Activated CD4-positive, alpha-beta memory T cell treated with anti-CD3 and anti-CD28 coated beads for 36 hours (primary cell): ENCODE measurements at regions of chr19 and their contacts with region 1.

Region 1: GRCh38 chr19:57819475-57820148 is 4.9 kb upstream of the ZNF552 start:
- DNase-seq: peak; percentile 89
- H3K4me3 Mint-ChIP-seq: peak overlapping the region; percentile 98
- H3K27ac Mint-ChIP-seq: peak overlapping the region; percentile 95
- H3K4me1 Mint-ChIP-seq: peaks cover 48% of the 10 kb centered on the region
- H3K27me3 Mint-ChIP-seq: no peaks in the 10 kb centered on the region

Region 2: DNA sequence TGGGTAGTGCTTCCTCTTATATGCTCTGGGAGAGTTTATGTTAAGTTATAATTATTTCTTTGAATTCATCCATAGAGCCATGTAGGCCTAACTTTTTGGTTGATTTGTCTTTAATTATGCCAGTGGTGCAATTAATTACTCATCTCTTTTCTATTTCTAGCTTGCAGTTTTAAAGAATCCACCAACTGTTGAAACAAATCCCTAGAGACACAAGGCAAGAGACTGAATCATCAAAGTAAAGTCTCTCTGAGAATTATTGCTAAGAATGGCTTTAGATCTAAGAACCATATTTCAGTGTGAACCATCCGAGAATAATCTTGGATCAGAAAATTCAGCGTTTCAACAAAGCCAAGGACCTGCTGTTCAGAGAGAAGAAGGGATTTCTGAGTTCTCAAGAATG is 143.7 kb before region 1 on chr19:
- CTCF ChIA-PET with region 1: no interaction called
- POLR2A ChIA-PET with region 1: no interaction called
- intact Hi-C with region 1: no loop called
- DNase-seq: no peak
- H3K4me3 Mint-ChIP-seq: no peak overlapping the region
- H3K27ac Mint-ChIP-seq: no peak overlapping the region
- H3K4me1 Mint-ChIP-seq: no peaks in the 10 kb centered on the region
- H3K27me3 Mint-ChIP-seq: peaks cover 10% of the 10 kb centered on the region

Region 3: DNA sequence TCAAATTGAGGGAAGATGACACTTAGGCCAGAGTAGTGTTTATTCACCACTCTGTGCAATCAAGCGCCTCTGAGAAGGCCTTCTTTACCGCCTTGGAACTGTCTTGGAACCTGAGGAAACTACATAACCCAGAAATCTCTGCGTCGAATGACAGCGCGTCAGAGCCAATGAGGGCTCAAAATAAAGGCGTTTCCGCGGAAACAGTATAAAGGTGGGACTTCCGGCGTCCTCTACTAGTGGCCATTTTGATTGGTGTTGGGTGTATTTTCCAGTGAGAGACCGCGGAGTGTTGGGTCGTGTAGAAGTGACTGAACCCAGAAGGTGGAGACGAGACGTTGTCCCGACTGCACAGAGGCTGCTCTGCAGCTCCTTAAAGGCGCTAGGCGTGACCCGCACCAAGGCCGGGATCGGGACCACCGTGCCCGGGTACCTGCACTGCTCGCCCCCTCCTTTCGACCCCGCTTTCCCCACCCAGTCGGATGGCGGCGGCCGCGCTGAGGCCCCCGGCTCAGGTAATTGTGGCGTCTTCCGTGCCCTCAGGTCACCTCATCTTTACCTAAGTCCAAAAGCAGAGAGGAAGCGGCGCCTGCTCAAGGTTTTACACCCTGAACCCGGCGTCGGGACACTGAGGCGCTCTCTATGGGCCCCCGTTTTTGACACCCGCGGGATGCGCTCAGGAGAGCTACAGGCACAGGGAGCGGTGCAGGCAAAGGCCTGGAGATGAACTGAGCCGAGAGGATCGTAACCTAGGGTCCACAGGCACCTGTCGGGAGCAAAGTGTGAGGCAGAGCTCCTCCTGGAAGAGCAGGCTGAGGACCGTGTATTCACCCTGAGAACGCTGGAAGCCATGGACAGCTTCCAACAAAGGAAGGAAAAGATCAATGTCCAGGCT is 72.8 kb before region 1 on chr19 and contains the start of gene ZNF776:
- CTCF ChIA-PET with region 1: no interaction called
- POLR2A ChIA-PET with region 1: no interaction called
- intact Hi-C with region 1: loop called (anchors 2 kb)
- DNase-seq: peak; percentile 89
- H3K4me3 Mint-ChIP-seq: peak within 1 kb of the TSS; percentile 94
- H3K27ac Mint-ChIP-seq: peak within 1 kb of the TSS; percentile 86
- H3K4me1 Mint-ChIP-seq: peaks cover 13% of the 10 kb centered on the region
- H3K27me3 Mint-ChIP-seq: no peaks in the 10 kb centered on the region
- total RNA-seq, gene ZNF776: 7.8 to 8.3 TPM

Region 4: DNA sequence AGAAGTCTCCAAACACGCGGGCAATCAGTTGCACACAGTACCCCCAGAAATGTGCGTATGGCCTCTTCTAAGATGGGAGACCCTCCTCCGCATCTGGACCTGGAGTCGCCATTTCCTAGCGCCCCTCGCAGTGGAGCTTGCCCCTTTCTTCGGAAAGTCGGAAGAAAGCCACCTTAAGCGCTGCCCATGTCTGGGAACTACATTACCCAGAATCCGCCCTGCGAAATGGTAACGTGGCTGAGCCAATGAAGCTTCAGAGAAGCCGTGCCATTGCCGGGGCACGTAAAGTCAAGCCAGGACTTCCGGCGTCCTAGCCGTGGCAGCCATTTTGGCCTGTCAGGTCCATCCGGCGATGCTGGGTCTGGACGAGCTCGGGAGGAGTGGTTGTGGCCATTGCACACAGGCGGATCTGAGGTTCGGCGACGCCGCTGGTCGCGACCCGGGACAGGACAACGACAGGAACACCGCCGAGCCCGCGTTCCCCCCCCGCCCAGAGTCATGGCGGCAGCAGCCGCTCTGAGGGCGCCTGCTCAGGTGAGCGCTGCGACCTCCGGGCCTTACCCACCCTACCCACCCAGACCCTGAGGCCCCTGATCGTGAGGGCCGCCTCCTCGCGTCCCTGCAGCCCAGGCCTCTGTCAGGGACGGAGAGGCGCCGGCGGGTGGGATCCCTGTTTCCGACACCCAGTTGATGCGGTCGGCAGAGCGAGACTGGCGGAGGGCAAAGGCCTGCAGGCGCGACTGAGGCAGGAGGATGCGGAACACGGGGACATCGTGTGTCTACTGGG is 50.1 kb before region 1 on chr19 and contains the start of gene ZNF586:
- CTCF ChIA-PET with region 1: no interaction called
- POLR2A ChIA-PET with region 1: interaction called, 7 read pairs
- intact Hi-C with region 1: loop called (anchors 1 kb)
- DNase-seq: peak; percentile 92
- H3K4me3 Mint-ChIP-seq: peak within 1 kb of the TSS; percentile 93
- H3K27ac Mint-ChIP-seq: peak within 1 kb of the TSS; percentile 87
- H3K4me1 Mint-ChIP-seq: peaks cover 26% of the 10 kb centered on the region
- H3K27me3 Mint-ChIP-seq: no peaks in the 10 kb centered on the region
- total RNA-seq, gene ZNF586: 11.5 to 11.7 TPM

Region 5: GRCh38 chr19:57850553-57851017 is 31.0 kb after region 1 on chr19:
- CTCF ChIA-PET with region 1: interaction called, 6 read pairs
- POLR2A ChIA-PET with region 1: interaction called, 5 read pairs
- intact Hi-C with region 1: loop called (anchors 5 kb)
- DNase-seq: peak; percentile 51
- H3K4me3 Mint-ChIP-seq: peak overlapping the region; percentile 89
- H3K27ac Mint-ChIP-seq: peak overlapping the region; percentile 90
- H3K4me1 Mint-ChIP-seq: peaks cover 19% of the 10 kb centered on the region
- H3K27me3 Mint-ChIP-seq: no peaks in the 10 kb centered on the region

Region 6: DNA sequence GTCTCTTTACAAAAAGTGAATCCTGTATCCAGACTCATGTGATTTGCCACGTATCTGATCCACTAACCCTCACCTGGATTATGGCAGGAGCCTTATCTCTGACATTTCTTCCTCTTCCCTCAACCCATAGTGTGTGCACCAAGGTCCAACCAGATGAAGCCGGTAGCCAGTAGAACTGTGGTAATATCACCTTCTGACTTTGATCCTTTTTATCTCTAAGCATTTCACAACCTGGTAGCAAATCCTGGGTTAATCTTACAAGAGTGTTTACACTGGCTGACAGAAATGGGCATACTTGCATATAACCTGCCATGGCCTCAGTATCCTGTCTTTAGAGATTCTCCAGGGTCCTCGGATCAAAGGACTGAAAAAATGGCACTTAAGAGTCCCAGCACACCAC is 94.9 kb after region 1 on chr19:
- CTCF ChIA-PET with region 1: no interaction called
- POLR2A ChIA-PET with region 1: interaction called, 3 read pairs
- intact Hi-C with region 1: loop called (anchors 2 kb)
- DNase-seq: no peak
- H3K4me3 Mint-ChIP-seq: no peak overlapping the region
- H3K27ac Mint-ChIP-seq: no peak overlapping the region
- H3K4me1 Mint-ChIP-seq: peaks cover 28% of the 10 kb centered on the region
- H3K27me3 Mint-ChIP-seq: no peaks in the 10 kb centered on the region

Region 7: GRCh38 chr19:58033741-58034471 is 214.3 kb after region 1 on chr19 and contains the start of gene ZSCAN1:
- CTCF ChIA-PET with region 1: no interaction called
- POLR2A ChIA-PET with region 1: no interaction called
- intact Hi-C with region 1: no loop called
- DNase-seq: peak; percentile 12
- H3K4me3 Mint-ChIP-seq: no peak within 1 kb of the TSS
- H3K27ac Mint-ChIP-seq: no peak within 1 kb of the TSS
- H3K4me1 Mint-ChIP-seq: peaks cover 3% of the 10 kb centered on the region
- H3K27me3 Mint-ChIP-seq: peaks cover 18% of the 10 kb centered on the region
- total RNA-seq, gene ZSCAN1: not detected